ENCODE measurements at regions of chr5 and their contacts with region 1.

Region 1: DNA sequence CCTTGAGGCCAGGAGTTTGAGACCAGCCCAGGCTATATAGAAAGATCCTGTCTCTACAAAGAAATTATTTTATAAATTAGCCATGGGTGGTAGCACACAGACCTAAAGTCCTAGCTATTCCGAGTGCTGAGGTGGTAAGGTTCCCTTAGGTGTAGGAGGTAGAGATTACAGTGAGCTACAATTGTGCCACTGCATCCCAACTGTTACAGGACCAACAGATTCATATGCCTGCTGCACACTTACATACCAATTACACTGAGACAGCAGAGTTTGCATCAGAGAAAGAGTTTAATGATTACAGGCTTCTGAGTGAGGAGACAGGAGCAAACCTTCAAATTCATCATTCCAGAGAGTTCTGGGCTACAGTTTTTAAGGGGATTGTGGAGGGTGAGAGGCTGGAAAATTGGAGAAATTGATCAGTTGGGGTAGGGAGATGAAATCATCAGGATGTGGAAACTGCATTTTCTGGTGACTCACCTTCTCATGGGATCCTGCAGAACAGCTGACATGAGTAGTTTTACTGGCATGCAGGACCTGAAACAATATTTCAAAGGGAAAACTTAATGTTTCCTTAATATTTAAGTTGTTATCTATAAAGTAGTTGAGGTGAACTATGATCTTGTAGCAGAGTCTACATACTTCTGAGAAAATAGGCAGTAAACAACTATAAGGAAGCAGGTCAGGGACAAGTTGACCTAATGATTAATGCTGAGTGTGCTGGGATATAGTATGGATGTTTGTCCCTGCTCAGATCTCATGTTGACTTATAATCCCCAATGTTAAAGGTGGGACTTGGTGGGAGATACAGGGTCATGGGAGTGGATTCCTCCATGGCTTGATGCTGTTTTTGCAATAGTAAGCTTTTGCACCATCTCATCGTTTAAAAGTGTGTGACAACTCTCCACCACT is 54.7 kb downstream of the ANXA2R start:
- DNase-seq: peak; percentile 38
- H3K4me3 Mint-ChIP-seq: peak overlapping the region; percentile 95
- H3K27ac Mint-ChIP-seq: peak overlapping the region; percentile 99
- H3K4me1 Mint-ChIP-seq: peaks cover 63% of the 10 kb centered on the region
- H3K27me3 Mint-ChIP-seq: no peaks in the 10 kb centered on the region
- CTCF ChIP-seq: no peak

Region 2: DNA sequence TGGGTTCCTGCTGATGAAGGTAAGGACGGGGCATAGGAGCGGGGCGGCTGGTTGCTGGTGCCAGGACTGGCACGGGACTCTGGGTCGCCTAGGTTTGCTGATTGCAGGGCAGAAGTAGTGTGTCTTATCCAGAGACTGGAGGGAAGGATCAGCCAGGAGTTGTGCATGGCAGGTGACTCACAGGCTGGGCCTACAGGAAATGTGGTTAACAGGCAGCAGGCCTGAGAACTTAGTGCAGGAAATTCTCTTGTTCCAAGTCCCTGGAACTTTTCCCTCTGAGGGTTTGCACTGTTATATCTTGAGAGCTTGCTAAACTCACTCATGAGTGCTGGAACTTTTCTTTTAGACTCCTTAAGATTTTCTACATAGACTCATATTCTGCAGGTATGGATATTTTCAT is 40.4 kb before region 1 on chr5:
- CTCF ChIA-PET with region 1: no interaction called
- intact Hi-C with region 1: loop called (anchors 2 kb)
- DNase-seq: peak; percentile 67
- H3K4me3 Mint-ChIP-seq: no peak overlapping the region
- H3K27ac Mint-ChIP-seq: peak overlapping the region; percentile 52
- H3K4me1 Mint-ChIP-seq: peaks cover 35% of the 10 kb centered on the region
- H3K27me3 Mint-ChIP-seq: no peaks in the 10 kb centered on the region
- CTCF ChIP-seq: no peak

Region 3: GRCh38 chr5:42950440-42951292 is 34.7 kb before region 1 on chr5:
- CTCF ChIA-PET with region 1: no interaction called
- intact Hi-C with region 1: loop called (anchors 2 kb)
- DNase-seq: peak; percentile 84
- H3K4me3 Mint-ChIP-seq: peak overlapping the region; percentile 44
- H3K27ac Mint-ChIP-seq: peak overlapping the region; percentile 84
- H3K4me1 Mint-ChIP-seq: peaks cover under 1% of the 10 kb centered on the region
- H3K27me3 Mint-ChIP-seq: no peaks in the 10 kb centered on the region
- CTCF ChIP-seq: no peak

Measured in Calu3 (cell line).